CD8-positive, alpha-beta memory T cell (primary cell): ENCODE measurements at regions of chr15 and their contacts with region 1.

Region 1: GRCh38 chr15:81265944-81266775 is 57.8 kb downstream of the STARD5 start:
- DNase-seq: peak; percentile 63 to 84 (median 71)
- H3K4me3 ChIP-seq: peak overlapping the region; percentile 35
- H3K4me3 Mint-ChIP-seq: peak overlapping the region; percentile 4 to 82 (median 78)
- H3K27ac ChIP-seq: no peak overlapping the region
- H3K27ac Mint-ChIP-seq: peak overlapping the region in 4 of 8 donors; percentile 25 to 71 (median 48)
- H3K4me1 ChIP-seq: peaks cover 17% of the 10 kb centered on the region
- H3K4me1 Mint-ChIP-seq: peaks cover 16 to 19% (median 18%) of the 10 kb centered on the region in 3 donors
- H3K27me3 ChIP-seq: no peaks in the 10 kb centered on the region
- H3K27me3 Mint-ChIP-seq: peaks cover 3 to 11% of the 10 kb centered on the region in 2 donors

Region 2: GRCh38 chr15:80152180-80152845 is 1113.8 kb before region 1 on chr15:
- CTCF ChIA-PET with region 1: no interaction called
- POLR2A ChIA-PET with region 1: no interaction called
- DNase-seq: peak; percentile 69 to 94 (median 88)
- H3K4me3 ChIP-seq: no peak overlapping the region
- H3K4me3 Mint-ChIP-seq: peak overlapping the region; percentile 84 to 95 (median 92)
- H3K27ac ChIP-seq: peak overlapping the region; percentile 33
- H3K27ac Mint-ChIP-seq: peak overlapping the region; percentile 57 to 91 (median 82)
- H3K4me1 ChIP-seq: peaks cover 10% of the 10 kb centered on the region
- H3K4me1 Mint-ChIP-seq: peaks cover 13 to 25% (median 22%) of the 10 kb centered on the region in 3 donors
- H3K27me3 ChIP-seq: no peaks in the 10 kb centered on the region
- H3K27me3 Mint-ChIP-seq: no peaks in the 10 kb centered on the region

Region 3: DNA sequence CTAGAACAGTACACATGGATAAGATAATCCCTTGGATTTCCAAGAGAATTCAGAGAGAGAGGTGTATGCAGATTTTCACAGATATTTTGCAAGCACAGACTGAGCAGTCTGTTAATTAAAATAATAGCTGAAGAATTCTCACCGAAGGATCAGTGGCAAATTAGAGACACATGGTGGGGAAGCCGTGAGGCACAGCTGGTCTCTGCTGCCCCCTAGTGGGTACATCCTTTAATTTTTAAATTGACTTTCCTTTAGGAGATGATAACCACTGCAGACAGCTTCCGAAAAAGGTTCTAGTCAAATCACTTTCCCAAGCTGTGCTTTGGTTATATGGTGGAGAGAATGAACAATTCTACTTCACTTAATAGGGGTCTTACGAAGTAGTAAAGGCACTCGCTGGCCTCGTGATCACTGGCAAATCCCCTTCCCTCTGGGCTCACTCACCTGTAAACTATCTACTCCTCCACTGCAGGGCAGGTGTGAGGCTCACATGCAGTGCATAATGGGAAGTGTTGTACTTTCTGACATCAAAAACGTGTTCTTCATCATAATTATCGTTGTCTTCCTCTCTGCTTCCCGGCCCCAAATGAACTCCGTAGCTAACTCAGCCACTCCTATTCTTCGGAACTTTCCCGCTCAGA is 296.0 kb before region 1 on chr15:
- CTCF ChIA-PET with region 1: interaction called, 11 read pairs
- POLR2A ChIA-PET with region 1: no interaction called
- DNase-seq: peak; percentile 34 to 60 (median 42)
- H3K4me3 ChIP-seq: no peak overlapping the region
- H3K4me3 Mint-ChIP-seq: no peak overlapping the region
- H3K27ac ChIP-seq: no peak overlapping the region
- H3K27ac Mint-ChIP-seq: peak overlapping the region in 5 of 8 donors; percentile 26 to 59 (median 36)
- H3K4me1 ChIP-seq: no peaks in the 10 kb centered on the region
- H3K4me1 Mint-ChIP-seq: peaks cover 16 to 18% (median 17%) of the 10 kb centered on the region in 3 donors
- H3K27me3 ChIP-seq: no peaks in the 10 kb centered on the region
- H3K27me3 Mint-ChIP-seq: peaks cover 0 to 3% of the 10 kb centered on the region in 2 donors

Region 4: DNA sequence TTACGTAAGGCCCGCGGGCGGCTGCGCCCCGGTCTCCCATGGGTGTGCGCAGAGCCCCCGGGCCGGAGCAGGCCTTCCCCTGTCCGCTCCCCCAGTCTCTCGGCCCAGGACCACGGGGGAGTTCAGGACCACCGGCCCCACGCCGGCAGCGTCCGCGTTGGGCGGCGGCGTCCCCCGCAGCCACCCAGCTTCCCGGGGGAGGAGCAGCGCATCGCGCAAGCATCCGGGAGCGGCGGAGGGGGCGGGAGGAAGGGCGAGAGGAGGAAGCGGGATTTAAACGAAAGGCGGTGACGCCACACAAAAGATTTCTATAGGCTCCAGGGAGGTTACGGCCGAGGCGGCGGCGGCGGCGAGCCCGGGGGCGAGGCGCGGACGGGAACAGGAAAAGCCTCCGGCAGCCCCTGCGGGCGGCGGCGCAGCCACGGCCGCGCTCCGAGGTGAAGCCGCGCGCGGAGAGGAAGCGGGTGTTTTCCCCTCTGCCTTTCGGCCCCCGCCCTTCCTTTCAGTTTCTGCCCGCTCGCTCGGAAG is 265.5 kb before region 1 on chr15 and contains the start of gene TLNRD1:
- CTCF ChIA-PET with region 1: interaction called, 23 read pairs
- POLR2A ChIA-PET with region 1: interaction called, 5 read pairs
- DNase-seq: peak; percentile 72 to 88 (median 82)
- H3K4me3 ChIP-seq: peak within 1 kb of the TSS; percentile 96
- H3K4me3 Mint-ChIP-seq: peak within 1 kb of the TSS; percentile 93 to 99 (median 98)
- H3K27ac ChIP-seq: peak within 1 kb of the TSS; percentile 93
- H3K27ac Mint-ChIP-seq: peak within 1 kb of the TSS; percentile 92 to 99 (median 99)
- H3K4me1 ChIP-seq: peaks cover 46% of the 10 kb centered on the region
- H3K4me1 Mint-ChIP-seq: peaks cover 44 to 52% (median 50%) of the 10 kb centered on the region in 3 donors
- H3K27me3 ChIP-seq: no peaks in the 10 kb centered on the region
- H3K27me3 Mint-ChIP-seq: no peaks in the 10 kb centered on the region
- total RNA-seq, gene TLNRD1: 35.9 to 38.6 TPM

Region 5: DNA sequence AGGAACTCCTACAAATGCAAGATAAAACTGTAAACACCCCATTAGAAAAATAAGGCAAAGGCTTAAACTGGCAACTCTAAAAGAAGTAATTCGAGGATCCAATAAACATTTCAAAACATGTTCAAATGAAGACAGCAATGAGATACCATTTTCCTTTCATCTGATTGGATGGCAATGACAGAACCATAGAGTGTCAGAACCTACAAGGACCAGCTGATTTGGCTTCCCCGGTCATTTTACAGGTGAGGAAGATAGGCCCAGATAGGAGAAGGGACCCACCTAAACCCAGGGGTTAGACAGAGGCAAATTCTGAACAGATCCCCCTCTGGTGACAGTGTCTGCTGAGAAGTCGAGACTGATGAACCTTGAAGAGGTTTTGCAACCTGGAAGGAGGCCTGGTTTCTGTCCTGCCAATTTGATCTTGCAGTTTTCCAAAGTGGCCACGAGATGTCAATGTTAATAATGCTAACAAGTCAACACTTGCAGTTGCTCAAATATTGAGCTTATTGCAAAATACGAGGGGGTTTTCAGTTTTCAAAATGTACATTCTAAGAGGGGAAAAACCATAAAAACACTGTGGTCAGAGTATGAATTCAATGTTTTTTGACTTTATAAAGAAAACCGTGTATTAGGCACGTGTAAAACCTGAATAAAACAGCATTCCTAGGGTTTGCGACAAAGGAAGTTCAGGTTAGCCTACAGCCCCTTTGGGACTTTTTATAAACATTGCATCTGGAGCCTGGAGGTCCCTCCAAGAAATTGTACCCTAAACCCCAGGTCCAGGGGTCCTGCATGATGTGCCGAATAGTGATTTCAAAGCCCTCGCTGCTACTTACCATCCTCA is 110.6 kb before region 1 on chr15:
- CTCF ChIA-PET with region 1: interaction called, 30 read pairs
- POLR2A ChIA-PET with region 1: no interaction called
- DNase-seq: peak in 1 of 5 donors; percentile 20
- H3K4me3 ChIP-seq: no peak overlapping the region
- H3K4me3 Mint-ChIP-seq: no peak overlapping the region
- H3K27ac ChIP-seq: no peak overlapping the region
- H3K27ac Mint-ChIP-seq: peak overlapping the region in 1 of 8 donors; percentile 37
- H3K4me1 ChIP-seq: no peaks in the 10 kb centered on the region
- H3K4me1 Mint-ChIP-seq: peaks cover 0 to 3% (median 0%) of the 10 kb centered on the region in 3 donors
- H3K27me3 ChIP-seq: no peaks in the 10 kb centered on the region
- H3K27me3 Mint-ChIP-seq: peaks cover 11 to 15% of the 10 kb centered on the region in 2 donors

Region 6: DNA sequence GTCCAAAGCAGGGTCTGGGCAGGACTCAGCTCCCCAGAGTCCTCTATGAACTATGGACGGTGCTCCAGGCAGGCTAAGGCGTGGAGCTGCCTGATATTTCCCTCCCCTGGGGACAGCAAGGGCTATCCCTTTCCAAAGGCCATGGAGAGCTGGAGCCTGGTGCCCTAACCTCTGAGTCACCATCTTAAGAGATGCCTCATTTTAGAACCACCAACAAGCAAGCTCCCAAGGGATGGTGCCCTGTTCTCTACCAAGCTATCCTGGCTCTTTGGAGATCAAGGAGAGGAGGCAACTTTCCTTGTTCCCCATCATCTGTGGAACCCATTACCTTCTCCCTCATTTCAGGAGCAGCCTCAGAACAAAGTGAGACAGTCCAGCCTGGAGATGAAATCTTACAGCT is 42.1 kb after region 1 on chr15:
- CTCF ChIA-PET with region 1: interaction called, 10 read pairs
- POLR2A ChIA-PET with region 1: no interaction called
- DNase-seq: no peak
- H3K4me3 ChIP-seq: no peak overlapping the region
- H3K4me3 Mint-ChIP-seq: no peak overlapping the region
- H3K27ac ChIP-seq: no peak overlapping the region
- H3K27ac Mint-ChIP-seq: peak overlapping the region in 7 of 8 donors; percentile 26 to 100 (median 74)
- H3K4me1 ChIP-seq: peaks cover 64% of the 10 kb centered on the region
- H3K4me1 Mint-ChIP-seq: peaks cover 75 to 99% (median 91%) of the 10 kb centered on the region in 3 donors
- H3K27me3 ChIP-seq: no peaks in the 10 kb centered on the region
- H3K27me3 Mint-ChIP-seq: no peaks in the 10 kb centered on the region

Region 7: GRCh38 chr15:81400640-81401236 is 134.6 kb after region 1 on chr15:
- CTCF ChIA-PET with region 1: interaction called, 67 read pairs
- POLR2A ChIA-PET with region 1: no interaction called
- DNase-seq: peak in 2 of 5 donors; percentile 20 to 44
- H3K4me3 ChIP-seq: no peak overlapping the region
- H3K4me3 Mint-ChIP-seq: no peak overlapping the region
- H3K27ac ChIP-seq: no peak overlapping the region
- H3K27ac Mint-ChIP-seq: peak overlapping the region in 1 of 8 donors; percentile 54
- H3K4me1 ChIP-seq: no peaks in the 10 kb centered on the region
- H3K4me1 Mint-ChIP-seq: peaks cover 0 to 5% (median 0%) of the 10 kb centered on the region in 3 donors
- H3K27me3 ChIP-seq: no peaks in the 10 kb centered on the region
- H3K27me3 Mint-ChIP-seq: peaks cover 0 to 7% of the 10 kb centered on the region in 2 donors